Prostate gland (tissue), 2 donors: ENCODE measurements at regions of chr14 and their contacts with region 1.

Region 1: DNA sequence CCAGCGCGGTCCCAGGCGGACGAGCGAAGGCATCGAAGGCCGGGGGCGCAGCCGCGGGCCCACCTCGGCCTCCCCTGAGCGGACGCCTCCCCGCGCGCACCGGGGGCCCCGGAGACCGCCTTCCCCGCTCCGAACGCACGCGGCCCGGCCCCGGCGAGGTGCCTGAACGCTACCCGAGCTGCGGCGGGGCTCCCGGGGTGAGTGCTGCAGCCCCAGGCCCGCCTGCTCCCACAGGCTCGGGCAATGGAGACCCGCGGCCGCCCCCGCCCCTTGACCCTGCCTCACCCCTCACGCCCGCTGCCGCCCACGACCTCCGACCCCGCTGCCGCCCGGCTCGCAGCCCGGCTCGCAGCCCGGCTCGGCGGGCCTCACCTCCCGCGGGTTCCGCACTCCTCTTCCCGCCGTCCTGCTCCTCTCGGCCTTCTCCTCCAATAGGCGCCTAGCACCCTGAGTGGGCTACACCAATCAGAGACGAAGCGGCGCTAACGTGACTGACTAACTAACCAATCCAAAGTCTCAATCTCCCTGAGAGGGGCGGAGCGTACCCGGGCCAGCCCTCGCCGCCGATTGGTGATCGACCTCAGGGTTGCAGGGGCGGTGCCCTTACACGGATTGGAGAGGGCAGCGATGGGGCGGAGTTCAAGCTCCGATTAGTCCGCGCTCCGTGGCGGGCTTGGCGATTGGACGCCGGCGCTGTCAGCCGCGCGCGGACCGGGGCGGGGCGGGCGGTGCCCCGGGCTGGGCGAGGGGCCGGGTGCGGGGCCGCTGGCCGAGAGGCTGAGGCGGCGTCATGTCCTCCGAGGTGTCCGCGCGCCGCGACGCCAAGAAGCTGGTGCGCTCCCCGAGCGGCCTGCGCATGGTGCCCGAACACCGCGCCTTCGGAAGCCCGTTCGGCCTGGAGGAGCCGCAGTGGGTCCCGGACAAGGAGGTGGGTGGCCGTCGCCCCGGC is at the starts of genes XRCC3 and ZFYVE21:
- DNase-seq: peak; percentile 100
- H3K4me3 ChIP-seq: peak within 1 kb of the TSS; percentile 86 to 99
- H3K27ac ChIP-seq: peak within 1 kb of the TSS; percentile 80 to 90
- H3K4me1 ChIP-seq: peaks cover 26% of the 10 kb centered on the region
- H3K27me3 ChIP-seq: no peaks in the 10 kb centered on the region
- CTCF ChIP-seq: peak in 1 of 4 experiments; percentile 11
- POLR2A ChIP-seq: peak; percentile 82
- total RNA-seq, gene XRCC3: 24.7 to 33.2 TPM
- total RNA-seq, gene ZFYVE21: 162 to 215 TPM

Region 2: DNA sequence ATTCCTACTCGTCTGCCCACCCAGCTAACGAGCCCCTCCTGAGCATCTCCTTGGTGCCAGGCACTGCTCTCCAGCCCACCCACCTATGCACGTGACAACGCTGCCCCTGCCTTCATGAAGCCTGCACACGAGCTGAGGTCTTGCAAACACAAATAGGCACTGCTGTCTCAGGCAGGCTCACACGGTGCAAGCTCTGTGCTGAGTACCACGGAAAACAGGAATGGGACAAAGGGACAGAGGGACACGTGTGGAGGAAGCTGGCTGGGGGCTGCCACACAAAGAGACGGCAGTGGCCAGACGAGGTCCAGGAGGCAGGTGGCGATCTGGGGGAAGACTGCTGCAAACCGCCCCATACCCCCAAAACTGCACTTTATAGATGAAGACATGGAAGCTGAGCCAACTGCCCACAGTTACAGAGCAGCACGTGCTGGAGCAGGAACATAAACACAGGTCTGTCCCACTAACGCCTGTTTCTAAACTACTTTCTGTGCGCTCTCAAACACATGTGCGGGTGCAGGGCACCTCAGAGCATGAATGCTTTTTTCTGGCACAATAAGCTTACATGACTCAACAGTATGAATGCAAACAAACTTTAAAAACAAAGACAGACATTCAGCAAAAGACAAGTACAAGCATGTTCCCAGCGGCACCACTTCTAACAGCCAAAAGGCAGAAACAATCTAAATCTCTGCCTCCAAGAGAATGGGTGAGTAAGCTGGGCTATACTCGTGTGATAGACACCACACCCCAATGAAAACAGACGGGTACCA is 728.3 kb before region 1 on chr14:
- intact Hi-C with region 1: no loop called
- DNase-seq: peak; percentile 66
- H3K4me3 ChIP-seq: no peak overlapping the region
- H3K27ac ChIP-seq: peak overlapping the region; percentile 43 to 76
- H3K4me1 ChIP-seq: peaks cover 17% of the 10 kb centered on the region
- H3K27me3 ChIP-seq: no peaks in the 10 kb centered on the region
- CTCF ChIP-seq: no peak
- POLR2A ChIP-seq: no peak

Region 3: DNA sequence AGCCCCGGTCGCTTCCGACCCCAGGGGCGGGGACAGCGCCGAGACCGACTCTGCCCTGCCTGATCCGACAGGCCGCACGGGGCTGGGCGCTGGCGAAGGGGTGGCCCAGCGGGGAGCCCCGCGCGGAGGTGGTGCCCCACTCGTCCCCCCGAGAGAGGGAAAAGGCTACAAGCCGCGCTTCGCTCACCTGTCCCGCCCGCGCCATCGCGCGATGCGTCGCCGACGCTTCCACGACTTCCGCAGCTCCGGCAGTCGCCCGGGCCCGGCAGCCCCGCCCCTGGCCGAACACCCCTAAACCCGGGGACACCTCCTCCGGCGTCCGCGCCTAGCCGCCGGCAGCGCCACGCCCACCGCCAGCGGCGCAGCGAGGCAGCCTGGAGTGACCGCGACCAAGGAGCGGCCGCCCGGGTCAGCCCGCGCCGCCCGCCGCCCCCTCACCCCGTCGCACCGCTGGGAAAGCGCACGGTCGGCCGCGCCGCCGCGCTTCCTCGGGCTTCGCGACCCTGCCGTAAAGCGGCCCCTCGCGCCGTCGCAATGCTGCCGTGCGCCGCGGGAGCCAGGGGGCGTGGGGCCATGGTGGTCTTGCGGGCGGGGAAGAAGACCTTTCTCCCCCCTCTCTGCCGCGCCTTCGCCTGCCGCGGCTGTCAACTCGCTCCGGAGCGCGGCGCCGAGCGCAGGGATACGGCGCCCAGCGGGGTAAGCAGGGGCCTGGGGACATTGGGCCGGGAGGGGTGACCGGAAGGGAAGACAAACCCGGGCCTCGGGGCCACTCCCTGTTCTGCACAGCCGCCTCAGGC is 152.7 kb before region 1 on chr14 and contains the starts of genes BAG5 and COA8:
- intact Hi-C with region 1: loop called (anchors 10 kb)
- DNase-seq: peak; percentile 73
- H3K4me3 ChIP-seq: peak within 1 kb of the TSS; percentile 88 to 96
- H3K27ac ChIP-seq: peak within 1 kb of the TSS; percentile 84 to 97
- H3K4me1 ChIP-seq: peaks cover 14% of the 10 kb centered on the region
- H3K27me3 ChIP-seq: no peaks in the 10 kb centered on the region
- CTCF ChIP-seq: peak in 2 of 4 experiments; percentile 45 to 50
- POLR2A ChIP-seq: peak; percentile 56
- total RNA-seq, gene BAG5: 31.2 to 33.3 TPM
- total RNA-seq, gene COA8: 24.3 to 24.9 TPM